Activated CD4-positive, alpha-beta T cell treated with anti-CD3 and anti-CD28 coated beads for 36 hours (primary cell): ENCODE measurements at regions of chr6 and their contacts with region 1.

Region 1: GRCh38 chr6:28080631-28081485 is 490 bp downstream of the ZNF165 start:
- DNase-seq: peak; percentile 93
- ATAC-seq: peak; percentile 84
- H3K4me3 Mint-ChIP-seq: peak overlapping the region; percentile 93
- H3K27ac Mint-ChIP-seq: peak overlapping the region; percentile 97
- H3K4me1 Mint-ChIP-seq: peaks cover 29% of the 10 kb centered on the region
- H3K27me3 Mint-ChIP-seq: no peaks in the 10 kb centered on the region

Region 2: GRCh38 chr6:27838058-27838944 is 242.6 kb before region 1 on chr6:
- CTCF ChIA-PET with region 1: no interaction called
- POLR2A ChIA-PET with region 1: no interaction called
- intact Hi-C with region 1: loop called in 1 of 2 experiments (anchors 5 kb)
- DNase-seq: peak; percentile 89
- ATAC-seq: peak; percentile 74
- H3K4me3 Mint-ChIP-seq: no peak overlapping the region
- H3K27ac Mint-ChIP-seq: no peak overlapping the region
- H3K4me1 Mint-ChIP-seq: peaks cover 23% of the 10 kb centered on the region
- H3K27me3 Mint-ChIP-seq: peaks cover 9% of the 10 kb centered on the region

Region 3: DNA sequence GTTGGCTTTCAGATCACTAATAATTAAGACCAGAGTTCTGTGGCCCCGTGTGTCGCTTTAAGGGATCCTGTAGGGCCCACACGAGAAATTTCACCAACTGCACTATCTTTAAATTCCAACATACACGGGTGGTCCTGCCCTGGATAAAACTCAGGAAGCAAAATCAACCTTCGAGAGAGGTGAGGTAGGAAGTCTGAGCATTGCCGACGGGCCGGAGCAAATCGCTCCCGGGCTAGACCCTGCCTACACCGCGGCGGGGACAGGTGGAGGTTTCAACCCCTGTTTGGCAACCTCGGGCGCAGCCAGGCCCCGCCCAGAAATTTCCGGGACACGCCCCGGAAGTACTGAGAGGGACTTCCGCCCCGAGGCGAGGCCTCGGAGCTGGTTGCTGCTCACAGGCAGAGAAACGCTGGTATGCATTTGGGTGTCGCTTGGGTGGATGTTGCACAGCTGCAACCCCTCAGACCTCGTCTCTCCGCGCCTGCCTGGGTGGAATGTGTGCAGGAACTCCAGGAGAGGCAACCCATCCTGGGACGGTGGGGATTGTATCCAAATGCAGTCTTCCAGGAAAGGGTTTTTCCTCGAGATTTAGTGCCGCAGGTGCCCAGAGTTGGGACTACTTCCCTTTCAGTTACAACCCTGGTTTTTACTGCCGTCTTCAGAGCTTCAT is 80.7 kb after region 1 on chr6:
- CTCF ChIA-PET with region 1: no interaction called
- POLR2A ChIA-PET with region 1: no interaction called
- intact Hi-C with region 1: loop called in 1 of 2 experiments (anchors 1 kb)
- DNase-seq: peak; percentile 89
- ATAC-seq: peak; percentile 98
- H3K4me3 Mint-ChIP-seq: peak overlapping the region; percentile 72
- H3K27ac Mint-ChIP-seq: peak overlapping the region; percentile 40
- H3K4me1 Mint-ChIP-seq: peaks cover 14% of the 10 kb centered on the region
- H3K27me3 Mint-ChIP-seq: peaks cover 2% of the 10 kb centered on the region

Region 4: GRCh38 chr6:28335564-28336283 is 254.9 kb after region 1 on chr6 and contains the start of gene ZSCAN31:
- CTCF ChIA-PET with region 1: no interaction called
- POLR2A ChIA-PET with region 1: no interaction called
- intact Hi-C with region 1: loop called in 1 of 2 experiments (anchors 5 kb)
- DNase-seq: peak; percentile 86
- ATAC-seq: peak; percentile 96
- H3K4me3 Mint-ChIP-seq: no peak within 1 kb of the TSS
- H3K27ac Mint-ChIP-seq: no peak within 1 kb of the TSS
- H3K4me1 Mint-ChIP-seq: peaks cover 7% of the 10 kb centered on the region
- H3K27me3 Mint-ChIP-seq: peaks cover 3% of the 10 kb centered on the region
- total RNA-seq, gene ZSCAN31: 1.3 to 1.8 TPM

Region 5: DNA sequence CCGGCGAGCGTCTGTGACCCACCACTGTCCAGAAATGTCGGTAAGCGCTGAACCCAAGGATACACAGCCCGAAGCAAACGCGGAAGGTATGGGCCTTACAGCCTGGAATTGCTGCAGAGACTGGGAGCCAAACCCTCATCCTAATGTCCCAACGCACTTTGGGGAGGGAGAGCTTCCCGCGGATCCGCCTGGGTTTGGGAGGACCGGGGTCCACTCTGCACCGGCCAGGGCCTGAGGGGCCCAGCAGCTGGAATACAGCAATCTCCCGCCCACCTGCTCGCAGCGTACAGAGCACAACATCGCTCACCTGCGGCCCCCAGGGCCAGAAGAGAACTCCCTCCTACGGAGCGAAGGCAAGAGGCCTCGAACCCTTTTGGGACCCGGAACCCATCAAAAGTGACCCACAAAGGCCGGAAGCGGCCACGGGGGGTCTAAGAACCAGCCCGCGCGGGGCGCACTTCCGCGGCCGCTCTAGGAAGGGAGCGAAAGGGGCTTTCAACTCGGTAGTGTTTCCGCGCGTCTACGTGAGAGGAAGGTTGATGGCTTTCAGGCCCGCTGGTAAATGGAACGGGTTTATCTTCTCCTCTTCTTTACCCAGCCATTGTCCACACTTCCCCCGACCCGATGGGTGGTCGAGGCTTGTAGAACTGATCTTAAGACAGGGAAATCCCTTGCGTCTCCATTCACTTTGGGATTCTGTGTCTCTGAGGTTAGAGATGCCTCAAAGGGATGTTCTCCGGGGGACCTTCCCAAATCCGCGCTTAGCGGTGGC is 318.7 kb after region 1 on chr6 and contains the start of gene ZSCAN12:
- CTCF ChIA-PET with region 1: no interaction called
- POLR2A ChIA-PET with region 1: no interaction called
- intact Hi-C with region 1: loop called in 1 of 2 experiments (anchors 1 kb)
- DNase-seq: peak; percentile 92
- ATAC-seq: peak; percentile 91
- H3K4me3 Mint-ChIP-seq: peak within 1 kb of the TSS; percentile 89
- H3K27ac Mint-ChIP-seq: peak within 1 kb of the TSS; percentile 92
- H3K4me1 Mint-ChIP-seq: peaks cover 42% of the 10 kb centered on the region
- H3K27me3 Mint-ChIP-seq: peaks cover 15% of the 10 kb centered on the region
- total RNA-seq, gene ZSCAN12: 6.9 to 7.6 TPM